Dorsolateral prefrontal cortex (tissue), 120 donors: ENCODE measurements at regions of chr20 and their contacts with region 1.

Region 1: GRCh38 chr20:64062596-64063388 is at the start of gene TCEA2:
- DNase-seq: peak; percentile 97 to 99 (median 98)
- H3K4me3 ChIP-seq: peak within 1 kb of the TSS; percentile 66 to 99 (median 94)
- H3K27ac ChIP-seq: peak within 1 kb of the TSS; percentile 29 to 97 (median 87)
- H3K27me3 ChIP-seq: no peaks in the 10 kb centered on the region
- CTCF ChIP-seq: peak in 37 of 56 donors; percentile 11 to 67 (median 30)
- total RNA-seq, gene TCEA2: 105 to 197 (median 137) TPM

Region 2: DNA sequence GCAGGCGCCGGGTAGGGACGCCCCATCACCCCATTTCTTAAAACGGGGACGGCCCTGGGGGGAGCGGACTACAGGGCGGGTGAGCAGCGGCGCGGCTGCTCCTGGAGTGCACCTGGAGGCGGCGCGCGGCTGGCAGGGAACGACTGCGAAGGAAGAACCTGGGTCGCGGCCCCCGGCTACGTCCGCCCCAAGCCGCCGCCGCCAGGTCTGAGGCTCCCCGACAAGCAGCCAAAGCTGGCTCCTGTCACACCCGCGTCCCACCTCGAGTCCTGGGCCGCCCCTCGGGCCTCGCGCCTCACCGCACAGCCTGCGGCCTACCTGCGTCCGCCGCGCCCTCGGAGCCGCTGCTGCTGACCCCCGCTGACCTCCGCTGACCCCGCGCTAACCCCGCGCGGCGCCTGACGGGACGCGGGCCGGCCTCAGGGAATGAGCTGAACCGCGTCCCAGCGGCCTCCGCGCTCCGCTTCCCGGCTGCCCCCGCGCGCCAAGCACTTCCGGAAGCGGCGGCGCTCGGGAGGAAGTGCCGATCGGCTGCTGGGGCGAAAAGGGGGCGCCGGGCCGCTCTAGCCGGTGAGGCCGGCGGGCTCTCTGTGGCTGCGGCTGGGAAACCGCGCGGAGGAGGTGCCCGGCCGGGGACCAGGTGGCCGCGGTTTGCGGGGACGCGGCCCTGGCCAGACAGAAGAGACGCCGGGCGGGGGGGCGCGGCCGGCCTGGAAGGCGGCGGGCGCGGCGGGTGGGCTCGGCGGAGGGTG is 355.1 kb before region 1 on chr20 and contains the starts of genes ARFRP1 and ZGPAT:
- intact Hi-C with region 1: loop called in 1 of 2 experiments (anchors 5 kb)
- DNase-seq: peak; percentile 88 to 97 (median 90)
- H3K4me3 ChIP-seq: peak within 1 kb of the TSS; percentile 72 to 100 (median 94)
- H3K27ac ChIP-seq: peak within 1 kb of the TSS in 55 of 59 donors; percentile 30 to 94 (median 83)
- H3K27me3 ChIP-seq: no peaks in the 10 kb centered on the region
- CTCF ChIP-seq: peak in 31 of 56 donors; percentile 5 to 59 (median 26)
- total RNA-seq, gene ARFRP1: 37.8 to 65.5 (median 48.4) TPM
- total RNA-seq, gene ZGPAT: 18.4 to 46.9 (median 28.4) TPM

Region 3: GRCh38 chr20:63955827-63956663 is 106.7 kb before region 1 on chr20 and contains the start of gene UCKL1:
- intact Hi-C with region 1: loop called (anchors 1 to 2 kb)
- DNase-seq: peak; percentile 81 to 92 (median 90)
- H3K4me3 ChIP-seq: peak within 1 kb of the TSS; percentile 71 to 100 (median 98)
- H3K27ac ChIP-seq: peak within 1 kb of the TSS; percentile 49 to 99 (median 91)
- H3K27me3 ChIP-seq: no peaks in the 10 kb centered on the region
- CTCF ChIP-seq: peak in 31 of 56 donors; percentile 3 to 38 (median 21)
- total RNA-seq, gene UCKL1: 22.1 to 74.1 (median 40.8) TPM

Region 4: DNA sequence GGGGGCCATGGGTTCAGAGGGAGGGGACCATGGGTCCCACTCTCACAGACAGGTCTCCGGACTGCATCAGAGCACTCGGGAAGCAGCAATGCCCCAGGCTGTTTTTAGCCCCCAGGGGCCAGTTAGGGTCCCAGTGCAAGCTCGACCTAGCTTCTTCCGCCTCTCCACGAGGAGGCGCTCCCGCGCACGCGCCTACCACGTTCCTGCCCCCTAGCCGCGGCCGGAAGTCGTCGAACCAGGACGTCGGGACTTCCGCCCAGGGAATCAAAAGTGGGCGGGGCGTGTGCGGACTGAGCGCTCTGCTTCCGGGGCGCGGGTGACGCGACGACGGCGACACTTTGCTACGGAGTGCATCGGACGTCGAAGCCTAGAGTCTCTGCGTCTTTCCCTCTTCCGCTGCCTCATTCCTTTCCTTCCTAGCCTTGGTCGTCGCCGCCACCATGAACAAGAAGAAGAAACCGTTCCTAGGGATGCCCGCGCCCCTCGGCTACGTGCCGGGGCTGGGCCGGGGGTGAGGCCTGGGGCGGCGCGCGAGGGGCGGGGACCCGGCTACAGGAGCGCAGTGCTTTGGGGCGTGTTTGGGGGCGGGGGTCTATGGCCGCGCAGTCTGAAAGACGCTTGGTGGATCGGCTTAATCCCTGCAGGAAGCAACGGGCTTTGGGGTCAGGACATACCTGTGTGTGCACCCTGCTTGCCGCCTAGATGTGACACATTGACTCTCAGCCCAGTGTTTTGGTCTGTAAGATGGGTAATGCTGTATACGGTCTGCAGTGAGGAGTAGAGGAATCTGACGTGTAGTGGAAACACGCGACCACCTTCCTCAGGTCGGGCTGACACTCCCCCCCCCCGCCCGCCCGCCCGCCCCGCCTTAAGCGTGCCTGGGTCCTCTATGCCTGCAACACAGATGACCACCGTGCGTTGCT is 81.7 kb before region 1 on chr20 and contains the start of gene PRPF6:
- intact Hi-C with region 1: loop called (anchors 5 kb)
- DNase-seq: peak; percentile 92 to 96 (median 94)
- H3K4me3 ChIP-seq: peak within 1 kb of the TSS; percentile 73 to 100 (median 98)
- H3K27ac ChIP-seq: peak within 1 kb of the TSS in 55 of 59 donors; percentile 10 to 88 (median 73)
- H3K27me3 ChIP-seq: peaks cover 0 to 17% (median 0%) of the 10 kb centered on the region in 45 donors
- CTCF ChIP-seq: peak; percentile 73 to 99 (median 96)
- total RNA-seq, gene PRPF6: 41.9 to 83.8 (median 68.3) TPM

Region 5: DNA sequence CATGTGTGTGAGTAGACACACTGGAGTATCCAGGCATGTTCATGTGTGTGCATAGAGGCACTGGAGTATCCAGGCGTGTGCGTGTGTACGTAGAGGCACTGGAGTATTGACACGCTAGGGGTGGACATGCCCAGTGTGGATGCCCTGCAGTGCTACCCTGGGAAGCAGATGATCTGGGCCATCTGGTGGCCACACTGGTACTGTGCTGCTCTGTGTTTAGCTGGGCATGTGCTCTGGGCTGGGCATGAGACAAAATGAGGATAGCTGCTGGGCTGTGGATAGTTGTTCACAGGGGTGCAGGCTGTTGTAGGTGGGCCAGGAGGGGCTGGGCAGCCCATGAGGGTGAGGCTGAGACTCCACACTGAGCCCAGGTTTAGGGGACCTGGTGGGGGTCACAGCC is 68.6 kb after region 1 on chr20:
- intact Hi-C with region 1: no loop called
- DNase-seq: peak in 4 of 10 donors; percentile 29 to 63 (median 38)
- H3K4me3 ChIP-seq: no peak overlapping the region
- H3K27ac ChIP-seq: no peak overlapping the region
- H3K27me3 ChIP-seq: peaks cover 0 to 7% (median 0%) of the 10 kb centered on the region in 45 donors
- CTCF ChIP-seq: peak in 10 of 56 donors; percentile 9 to 28 (median 15)